ENCODE measurements at regions of chr1 and their contacts with region 1.

Region 1: GRCh38 chr1:48202030-48202752 is 20.3 kb upstream of the SLC5A9 start:
- DNase-seq: peak; percentile 53
- H3K4me3 ChIP-seq: no peak overlapping the region
- H3K27ac ChIP-seq: no peak overlapping the region
- H3K27me3 ChIP-seq: no peaks in the 10 kb centered on the region
- CTCF ChIP-seq: peak; percentile 86

Region 2: GRCh38 chr1:48109390-48110013 is 92.7 kb before region 1 on chr1:
- CTCF ChIA-PET with region 1: interaction called, 56 read pairs
- POLR2A ChIA-PET with region 1: no interaction called
- DNase-seq: peak; percentile 18
- H3K4me3 ChIP-seq: no peak overlapping the region
- H3K27ac ChIP-seq: no peak overlapping the region
- H3K27me3 ChIP-seq: no peaks in the 10 kb centered on the region
- CTCF ChIP-seq: peak; percentile 96

Region 3: DNA sequence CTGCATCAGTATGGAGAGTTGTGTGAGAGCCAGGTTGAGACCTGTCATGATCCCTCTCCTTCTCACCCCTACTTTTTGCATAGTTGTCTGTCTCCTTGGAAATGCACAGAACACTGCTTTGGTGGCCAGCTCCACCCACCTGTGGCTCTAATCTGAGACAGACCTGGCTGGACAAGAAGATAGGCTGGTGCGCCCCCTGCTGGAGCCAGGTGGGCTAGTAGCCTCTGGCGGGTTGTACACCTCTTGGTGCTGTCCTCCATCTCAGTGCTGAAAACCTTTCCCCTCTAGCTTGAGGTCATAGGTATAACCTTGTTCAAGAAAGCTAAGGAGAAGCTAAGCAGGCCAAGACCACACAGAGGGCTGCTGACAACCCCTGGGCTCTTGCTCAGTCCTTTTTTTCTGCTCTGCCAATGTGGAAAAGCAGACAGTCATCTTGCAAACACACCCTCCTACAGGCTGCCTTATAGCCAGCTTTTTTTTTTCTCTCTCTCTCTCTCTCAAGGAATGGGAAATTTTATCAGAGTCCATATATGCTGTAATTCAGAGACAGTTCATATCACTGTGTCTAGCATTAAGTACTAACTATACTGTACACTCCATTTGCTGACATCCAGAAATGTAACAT is 328.6 kb after region 1 on chr1:
- CTCF ChIA-PET with region 1: no interaction called
- POLR2A ChIA-PET with region 1: no interaction called
- DNase-seq: peak; percentile 4
- H3K4me3 ChIP-seq: no peak overlapping the region
- H3K27ac ChIP-seq: no peak overlapping the region
- H3K27me3 ChIP-seq: no peaks in the 10 kb centered on the region
- CTCF ChIP-seq: peak; percentile 71

Measured in AG04450 (cell line).